ENCODE measurements at regions of chr3 and their contacts with region 1.

Region 1: GRCh38 chr3:171468296-171468906 is 8.2 kb upstream of the TNIK start:
- DNase-seq: no peak
- ATAC-seq: no peak
- H3K4me3 ChIP-seq: no peak overlapping the region
- H3K4me3 Mint-ChIP-seq: no peak overlapping the region
- H3K27ac ChIP-seq: no peak overlapping the region
- H3K27ac Mint-ChIP-seq: no peak overlapping the region
- H3K4me1 ChIP-seq: no peaks in the 10 kb centered on the region
- H3K4me1 Mint-ChIP-seq: no peaks in the 10 kb centered on the region
- H3K27me3 ChIP-seq: no peaks in the 10 kb centered on the region
- H3K27me3 Mint-ChIP-seq: no peaks in the 10 kb centered on the region

Region 2: DNA sequence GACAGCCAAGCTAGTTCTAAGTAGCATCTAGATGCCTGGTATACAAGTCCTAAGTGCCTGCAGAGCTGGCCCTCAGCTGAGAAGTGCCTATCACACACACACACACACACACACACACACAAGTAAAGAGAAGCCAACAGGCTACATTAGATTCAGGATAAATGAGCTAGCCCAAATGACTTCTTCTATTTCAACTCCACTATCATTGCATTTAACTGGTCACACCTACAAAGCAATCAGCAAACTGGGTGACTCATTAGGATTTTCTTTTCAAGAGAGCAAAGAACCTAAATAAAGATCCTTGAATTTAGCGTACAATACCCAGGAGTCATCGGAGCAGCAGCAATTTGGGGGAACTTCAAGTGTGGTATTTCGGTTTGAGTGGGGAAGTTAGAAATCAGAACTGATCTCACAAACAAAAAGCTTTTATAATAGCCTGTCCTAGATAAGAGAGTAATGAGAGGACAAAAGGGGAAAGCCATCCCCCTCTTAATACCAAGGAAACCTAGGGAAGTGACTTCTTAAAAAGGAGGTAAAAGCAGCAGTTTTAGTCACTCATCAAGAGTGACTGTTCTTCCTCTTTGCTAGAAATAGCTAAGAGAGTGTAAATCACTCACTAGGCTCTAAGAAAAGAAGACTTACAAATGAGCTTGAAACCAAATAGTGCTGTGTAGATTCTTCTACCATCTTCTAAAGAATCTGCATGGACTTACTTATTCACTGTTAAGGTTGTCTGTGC is 120.9 kb before region 1 on chr3:
- CTCF ChIA-PET with region 1: no interaction called
- POLR2A ChIA-PET with region 1: no interaction called
- DNase-seq: no peak
- ATAC-seq: peak in 1 of 4 experiments; percentile 12
- H3K4me3 ChIP-seq: no peak overlapping the region
- H3K4me3 Mint-ChIP-seq: no peak overlapping the region
- H3K27ac ChIP-seq: no peak overlapping the region
- H3K27ac Mint-ChIP-seq: no peak overlapping the region
- H3K4me1 ChIP-seq: no peaks in the 10 kb centered on the region
- H3K4me1 Mint-ChIP-seq: peaks cover 68 to 79% (median 73%) of the 10 kb centered on the region in 3 donors
- H3K27me3 ChIP-seq: no peaks in the 10 kb centered on the region
- H3K27me3 Mint-ChIP-seq: no peaks in the 10 kb centered on the region

Region 3: DNA sequence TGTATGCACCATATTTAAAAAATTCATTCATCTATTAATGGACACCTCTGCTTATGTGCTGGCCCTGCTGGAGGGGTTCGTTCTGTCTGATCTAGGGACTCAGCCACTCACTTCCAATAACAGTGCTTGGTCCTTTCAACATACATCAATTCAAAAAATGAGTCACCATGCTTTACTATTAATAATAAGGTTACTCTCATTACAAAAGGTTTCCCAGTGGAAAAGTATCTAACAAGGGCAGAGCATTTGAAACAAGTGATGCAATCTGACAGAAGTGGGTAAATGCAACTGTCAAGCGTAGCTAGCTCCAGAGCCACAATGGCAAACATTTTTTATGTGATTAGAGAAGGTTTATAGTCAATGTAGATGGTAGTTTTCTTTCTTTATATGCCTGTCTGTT is 59.7 kb after region 1 on chr3:
- CTCF ChIA-PET with region 1: interaction called in 1 of 2 experiments, 10 read pairs
- POLR2A ChIA-PET with region 1: no interaction called
- DNase-seq: no peak
- ATAC-seq: no peak
- H3K4me3 ChIP-seq: no peak overlapping the region
- H3K4me3 Mint-ChIP-seq: no peak overlapping the region
- H3K27ac ChIP-seq: no peak overlapping the region
- H3K27ac Mint-ChIP-seq: no peak overlapping the region
- H3K4me1 ChIP-seq: no peaks in the 10 kb centered on the region
- H3K4me1 Mint-ChIP-seq: peaks cover 0 to 2% (median 0%) of the 10 kb centered on the region in 3 donors
- H3K27me3 ChIP-seq: no peaks in the 10 kb centered on the region
- H3K27me3 Mint-ChIP-seq: no peaks in the 10 kb centered on the region

Measured in T-cell (primary cell).